GM13977 (cell line): ENCODE measurements at regions of chr17 and their contacts with region 1.

Region 1: DNA sequence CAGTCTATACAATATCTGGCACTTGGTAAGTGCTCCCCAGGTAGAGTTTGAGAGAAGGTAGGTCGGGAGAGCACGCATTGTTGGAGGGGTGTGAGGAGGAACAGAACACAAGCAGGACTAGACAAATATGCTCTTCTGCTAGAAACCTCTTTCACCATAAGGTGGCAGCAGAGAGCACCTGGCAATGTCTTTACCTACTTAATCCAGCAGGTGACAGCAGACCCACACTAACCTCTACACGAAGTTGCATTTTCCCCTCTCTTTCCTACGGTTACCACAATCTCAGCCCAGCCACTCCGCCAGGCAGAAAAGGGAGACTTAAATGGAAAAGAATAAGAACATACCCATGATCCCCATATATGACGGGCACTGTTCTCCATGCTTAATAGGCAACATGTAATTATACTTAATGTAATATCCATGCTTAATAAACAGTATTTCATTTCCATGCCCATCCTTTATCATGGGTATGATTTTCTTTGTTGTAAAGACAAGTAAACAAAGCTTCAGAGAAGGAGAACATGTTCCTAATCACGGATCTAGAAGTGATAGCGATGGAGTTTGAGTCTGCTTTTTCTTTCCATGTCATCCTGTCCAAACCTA is 55.1 kb upstream of the CCL2 start:
- DNase-seq: peak; percentile 77
- CTCF ChIP-seq: peak; percentile 100

Region 2: DNA sequence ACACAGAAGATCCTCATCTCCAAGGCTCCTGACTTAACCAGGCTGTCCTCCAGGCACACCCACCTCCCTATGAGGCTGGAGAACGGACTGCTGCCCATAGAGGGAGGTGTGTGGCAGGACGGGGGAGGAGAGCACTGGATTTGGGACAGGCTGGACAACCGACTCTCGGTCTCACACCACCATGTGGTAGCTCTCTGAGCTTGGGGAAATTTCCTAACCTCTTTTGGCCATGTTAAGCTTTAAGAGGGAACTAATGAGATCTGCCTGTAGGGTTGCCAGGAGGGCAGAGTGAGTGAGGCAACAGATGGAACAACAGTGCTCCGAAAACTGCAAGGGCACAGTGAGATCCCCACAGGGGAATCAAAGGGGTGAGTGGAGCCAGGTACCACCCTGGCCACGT is 1901.7 kb before region 1 on chr17:
- in situ Hi-C with region 1: no loop called
- DNase-seq: no peak
- CTCF ChIP-seq: no peak

Region 3: DNA sequence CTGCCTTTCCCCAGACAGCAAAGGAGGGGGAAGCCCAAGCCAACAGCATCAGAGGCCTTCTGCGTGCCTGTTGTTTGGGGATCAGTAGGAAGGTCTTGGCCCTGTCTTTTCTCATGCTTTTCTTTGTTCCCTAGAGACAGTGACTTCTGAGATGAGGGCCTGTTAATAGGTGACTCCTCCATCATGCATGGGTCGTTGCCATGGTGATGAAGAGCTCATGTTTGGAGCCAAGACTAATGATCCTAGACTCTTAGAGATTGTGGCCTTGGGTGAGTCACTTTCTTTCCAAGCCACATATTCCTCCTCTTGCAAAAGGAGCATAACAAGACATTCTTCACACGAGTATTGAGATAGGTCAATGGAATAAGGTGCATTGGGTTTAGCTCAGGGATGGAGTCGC is 705.9 kb before region 1 on chr17:
- in situ Hi-C with region 1: no loop called
- DNase-seq: no peak
- CTCF ChIP-seq: no peak

Region 4: DNA sequence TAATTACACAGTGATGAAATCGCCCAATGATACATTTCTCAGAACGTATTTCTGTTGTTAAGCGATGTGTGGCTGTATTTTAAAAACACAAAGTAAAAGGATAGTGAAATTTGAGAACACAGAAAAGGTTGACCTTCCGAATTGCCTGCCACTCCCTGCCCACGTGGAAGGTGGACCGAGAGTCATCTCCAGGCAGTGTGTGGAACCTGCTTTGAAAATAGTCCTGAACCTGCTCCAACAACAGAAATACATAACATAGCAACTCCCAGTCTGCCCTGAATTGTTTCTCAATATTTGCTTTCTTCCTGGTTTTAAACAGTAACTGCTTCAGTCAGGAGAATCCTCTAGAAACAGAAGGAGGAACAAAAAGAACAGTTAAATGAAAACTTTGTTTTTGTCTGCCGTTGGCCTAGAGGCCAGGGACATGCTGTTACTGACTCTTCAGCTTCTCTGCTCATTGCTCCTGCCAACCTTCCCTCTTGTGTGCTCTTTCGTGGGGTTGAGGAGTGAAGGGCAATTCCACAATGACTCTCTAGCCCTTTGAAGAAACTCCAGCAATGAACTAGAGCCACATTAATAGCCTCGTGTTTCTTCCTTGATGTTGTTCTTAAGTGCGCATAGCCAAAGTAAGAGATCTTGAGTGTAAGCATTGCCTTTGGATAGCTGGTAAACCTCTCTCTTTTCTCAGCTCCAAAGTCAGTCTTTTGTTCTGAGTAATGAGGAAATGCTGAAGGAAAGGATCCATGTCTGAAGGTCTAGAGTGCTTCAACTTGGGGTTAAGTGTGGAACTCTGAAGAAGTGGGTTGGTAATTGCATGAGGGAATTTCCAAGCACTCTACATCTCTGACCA is 397.5 kb before region 1 on chr17:
- in situ Hi-C with region 1: no loop called
- DNase-seq: no peak
- CTCF ChIP-seq: no peak

Region 5: DNA sequence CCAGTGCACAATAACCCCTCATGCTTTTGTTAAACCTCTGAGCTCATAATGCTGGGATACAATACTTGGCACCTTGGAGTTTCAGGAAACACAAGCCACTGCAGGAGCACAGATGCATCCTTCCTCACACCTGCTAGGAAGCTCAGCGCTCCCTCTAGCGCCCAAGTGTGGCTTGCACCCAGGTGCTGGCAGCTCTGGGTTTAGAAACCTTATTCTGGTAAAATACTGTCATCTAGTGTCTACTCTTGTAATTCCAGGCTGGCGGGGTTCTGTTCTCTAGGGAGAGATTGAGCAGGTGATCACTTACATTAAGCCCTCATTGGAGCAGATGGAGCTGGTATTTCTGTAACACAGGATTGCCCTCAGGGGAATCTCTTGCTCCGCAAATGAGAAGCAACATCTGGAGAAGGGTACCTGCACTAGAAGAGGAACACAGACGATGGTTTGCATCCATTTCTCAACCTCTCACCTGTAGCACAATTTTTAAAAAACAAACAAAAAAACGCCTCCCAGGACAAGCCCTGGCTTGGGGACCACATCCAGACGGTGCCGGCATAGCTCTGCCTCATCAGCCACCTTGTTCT is 161.5 kb after region 1 on chr17:
- in situ Hi-C with region 1: loop called (anchors 10 kb)
- DNase-seq: peak; percentile 81
- CTCF ChIP-seq: peak; percentile 100